ENCODE measurements at regions of chr2 and their contacts with region 1.

Region 1: DNA sequence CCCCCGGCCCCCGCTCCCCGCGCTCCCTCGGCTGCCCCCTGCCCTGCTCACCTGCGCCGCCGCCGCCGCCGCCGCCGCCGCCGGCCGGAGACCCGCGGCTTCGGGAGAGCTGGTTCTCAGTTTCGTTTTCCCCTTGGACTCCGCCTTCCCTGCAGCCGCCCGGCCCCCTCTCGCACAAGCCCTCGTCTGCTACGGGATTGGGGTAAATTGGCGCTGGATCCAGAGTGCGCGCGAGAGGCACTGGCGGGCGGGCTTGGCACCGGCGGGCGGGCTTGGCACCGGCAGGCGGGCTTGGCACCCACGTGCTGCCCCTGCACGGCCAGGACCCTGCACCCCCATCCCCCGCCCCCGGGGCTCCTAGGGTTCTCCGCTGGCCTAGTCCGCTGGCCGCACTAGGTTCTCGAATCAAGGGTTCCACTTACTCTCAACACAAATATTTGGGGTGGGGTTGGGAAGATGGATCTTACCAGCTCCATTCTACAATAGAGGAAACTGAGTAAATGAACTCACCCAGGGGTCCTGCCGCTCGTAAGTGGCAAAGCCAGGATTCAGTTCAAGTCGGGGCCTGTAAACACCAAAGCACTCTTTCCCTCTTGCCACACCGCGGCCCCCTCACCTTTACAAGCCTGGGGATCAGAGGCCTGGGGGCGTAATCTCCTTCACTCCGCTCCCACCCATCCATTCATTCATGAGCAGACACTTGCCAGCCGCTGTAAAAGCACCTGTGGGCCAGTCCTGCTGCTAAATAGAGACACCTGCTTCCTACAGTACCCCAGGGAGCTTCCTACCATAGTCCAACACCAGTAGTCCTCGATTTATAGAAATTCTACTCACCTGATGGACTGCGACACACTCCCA is at the start of gene EIF2AK2:
- DNase-seq: peak; percentile 84
- H3K4me3 Mint-ChIP-seq: peak within 1 kb of the TSS; percentile 89
- H3K27ac Mint-ChIP-seq: peak within 1 kb of the TSS; percentile 93
- H3K4me1 Mint-ChIP-seq: peaks cover 46% of the 10 kb centered on the region
- H3K27me3 Mint-ChIP-seq: no peaks in the 10 kb centered on the region
- total RNA-seq, gene EIF2AK2: 40.5 and 41.9 TPM in 2 replicates

Region 2: GRCh38 chr2:37173741-37174140 is 16.7 kb after region 1 on chr2:
- intact Hi-C with region 1: no loop called
- DNase-seq: no peak
- H3K4me3 Mint-ChIP-seq: no peak overlapping the region
- H3K27ac Mint-ChIP-seq: no peak overlapping the region
- H3K4me1 Mint-ChIP-seq: no peaks in the 10 kb centered on the region
- H3K27me3 Mint-ChIP-seq: peaks cover 6% of the 10 kb centered on the region

Region 3: GRCh38 chr2:37196320-37197195 is 39.5 kb after region 1 on chr2 and contains the start of gene CEBPZOS:
- intact Hi-C with region 1: loop called (anchors 1 kb)
- DNase-seq: peak; percentile 80
- H3K4me3 Mint-ChIP-seq: peak within 1 kb of the TSS; percentile 99
- H3K27ac Mint-ChIP-seq: peak within 1 kb of the TSS; percentile 100
- H3K4me1 Mint-ChIP-seq: peaks cover 41% of the 10 kb centered on the region
- H3K27me3 Mint-ChIP-seq: no peaks in the 10 kb centered on the region
- total RNA-seq, gene CEBPZOS: 39.5 and 45.3 TPM in 2 replicates